Mucosa of descending colon (tissue), 3 donors: ENCODE measurements at regions of chr17 and their contacts with region 1.

Region 1: GRCh38 chr17:38674749-38675615 is at the start of gene EPOP:
- DNase-seq: peak; percentile 82 to 90 (median 87)
- ATAC-seq: peak; percentile 91
- H3K4me3 ChIP-seq: peak within 1 kb of the TSS; percentile 6
- H3K4me1 ChIP-seq: peaks cover 20% of the 10 kb centered on the region
- CTCF ChIP-seq: no peak
- total RNA-seq, gene EPOP: 0.75 to 1.1 TPM in 2 of 3 donors, not detected in the other

Region 2: DNA sequence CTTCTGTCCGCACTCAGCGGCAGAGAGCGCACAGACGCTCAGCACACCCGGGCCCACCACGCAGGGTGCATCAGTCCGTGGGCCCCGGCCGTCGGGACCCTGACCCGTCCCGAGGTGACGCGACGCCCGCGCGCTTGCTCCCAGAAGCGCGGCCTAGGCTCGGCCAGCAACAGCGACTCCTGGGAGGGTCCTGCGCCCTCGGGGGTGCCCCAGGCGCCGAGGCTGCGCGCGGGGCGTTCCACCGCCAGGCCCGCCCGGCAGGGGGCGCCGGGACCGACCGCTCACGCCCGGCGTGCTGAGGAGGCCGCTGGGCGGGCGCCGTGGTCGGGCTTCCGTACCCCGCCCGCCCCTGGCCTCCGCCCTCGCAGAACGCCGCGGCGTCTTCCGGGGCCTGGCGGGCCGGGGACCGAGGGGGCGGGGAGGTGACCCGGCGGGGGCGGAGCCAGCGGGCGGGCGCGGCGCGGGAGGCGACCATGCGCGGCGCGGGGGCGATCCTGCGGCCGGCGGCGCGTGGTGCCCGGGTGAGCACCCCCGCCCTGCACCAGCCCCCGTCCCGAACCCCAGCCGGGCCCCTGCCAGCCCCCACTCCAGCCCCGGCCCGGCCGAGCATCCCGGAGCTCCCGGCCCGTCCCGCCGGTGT is 55.0 kb after region 1 on chr17 and contains the start of gene CISD3:
- intact Hi-C with region 1: loop called (anchors 5 to 10 kb)
- DNase-seq: peak; percentile 90 to 94 (median 93)
- ATAC-seq: peak; percentile 81
- H3K4me3 ChIP-seq: peak within 1 kb of the TSS; percentile 50
- H3K4me1 ChIP-seq: peaks cover 47% of the 10 kb centered on the region
- CTCF ChIP-seq: peak; percentile 93
- total RNA-seq, gene CISD3: 60.8 to 101 (median 91.8) TPM

Region 3: GRCh38 chr17:38735161-38735997 is 60.4 kb after region 1 on chr17:
- intact Hi-C with region 1: loop called (anchors 5 to 10 kb)
- DNase-seq: peak in 2 of 3 donors; percentile 71 to 74
- ATAC-seq: no peak
- H3K4me3 ChIP-seq: no peak overlapping the region
- H3K4me1 ChIP-seq: peaks cover 34% of the 10 kb centered on the region
- CTCF ChIP-seq: peak; percentile 65